Heart right ventricle (tissue), 16 donors: ENCODE measurements at regions of chr17 and their contacts with region 1.

Region 1: DNA sequence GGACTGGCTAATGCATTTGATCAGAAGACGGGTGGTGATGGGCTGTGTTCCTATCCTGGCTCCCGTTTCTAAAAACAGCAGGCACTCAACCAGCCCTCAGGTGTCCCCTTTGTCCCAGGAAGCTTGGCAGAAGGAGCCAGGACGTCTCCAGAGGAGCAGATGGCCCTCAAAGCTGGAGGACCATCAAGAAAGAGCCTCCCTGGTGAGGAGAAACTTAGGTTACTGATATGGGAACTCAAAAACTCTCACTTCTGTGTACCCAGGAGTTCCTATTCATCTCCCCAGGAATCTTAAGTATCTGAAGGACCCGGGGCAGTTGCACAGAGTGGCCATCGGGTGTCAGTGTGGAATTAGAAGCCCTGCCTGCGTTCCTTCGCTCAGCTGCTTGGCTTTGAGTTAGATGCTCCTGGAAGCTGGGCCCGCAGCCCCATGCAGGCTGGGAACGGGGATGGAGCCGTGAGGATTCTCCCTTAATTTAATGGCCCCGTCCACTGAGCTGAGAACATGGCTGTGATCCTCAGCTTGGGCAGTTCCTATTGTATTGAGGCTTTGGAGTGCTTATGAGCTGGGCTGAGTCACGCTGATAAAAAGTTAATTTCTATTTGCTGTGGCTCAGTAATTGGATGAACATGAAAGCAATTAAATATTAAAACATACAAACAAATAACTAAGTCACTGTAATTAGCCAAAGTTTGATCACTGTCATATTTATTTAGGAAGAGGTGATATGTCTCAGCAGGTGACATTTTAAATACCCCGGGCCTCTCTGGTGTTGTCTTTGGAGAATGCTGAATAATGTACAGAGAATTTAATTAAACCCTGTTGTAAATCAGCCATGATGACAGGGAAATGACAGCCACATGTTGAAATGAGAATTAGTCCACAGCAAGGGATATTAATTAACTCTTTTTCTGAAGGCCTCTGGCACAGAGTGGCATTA is 402.1 kb downstream of the SEC14L1 start:
- DNase-seq: peak; percentile 66 to 85
- ATAC-seq: peak; percentile 82 to 96 (median 94)
- H3K4me3 ChIP-seq: no peak overlapping the region
- H3K27ac ChIP-seq: peak overlapping the region in 9 of 10 donors; percentile 29 to 88 (median 71)
- H3K4me1 ChIP-seq: peaks cover 0 to 28% (median 13%) of the 10 kb centered on the region in 9 donors
- H3K27me3 ChIP-seq: peaks cover 0 to 20% (median 4%) of the 10 kb centered on the region in 7 donors
- CTCF ChIP-seq: peak; percentile 77 to 97 (median 92)

Region 2: DNA sequence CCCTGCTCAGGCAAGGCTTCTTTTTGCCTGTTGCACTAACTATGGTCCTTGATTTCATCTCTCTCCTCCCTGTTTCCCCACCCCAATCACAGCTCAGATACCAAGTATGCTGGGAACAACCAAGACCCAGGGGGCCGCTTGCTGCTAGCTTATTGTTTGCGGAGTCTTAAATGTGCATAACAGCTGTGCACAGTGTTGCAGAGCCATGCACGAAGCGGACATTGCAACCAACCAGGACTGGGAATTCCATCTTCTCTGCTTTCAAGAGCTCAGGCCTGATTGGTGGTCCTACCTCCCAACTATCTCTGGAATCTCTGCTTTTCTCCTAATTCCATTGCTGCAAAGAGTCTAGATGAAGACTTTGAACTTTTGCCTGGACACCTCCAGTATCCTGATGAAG is 134.4 kb after region 1 on chr17:
- intact Hi-C with region 1: loop called in 1 of 10 experiments (anchors 10 kb)
- DNase-seq: peak; percentile 36 to 40
- ATAC-seq: peak in 5 of 8 donors; percentile 31 to 65 (median 62)
- H3K4me3 ChIP-seq: peak overlapping the region in 2 of 10 donors; percentile 14 to 23
- H3K27ac ChIP-seq: peak overlapping the region in 7 of 10 donors; percentile 20 to 75 (median 50)
- H3K4me1 ChIP-seq: peaks cover 11 to 47% (median 27%) of the 10 kb centered on the region in 9 donors
- H3K27me3 ChIP-seq: no peaks in the 10 kb centered on the region
- CTCF ChIP-seq: no peak

Region 3: GRCh38 chr17:77724876-77725615 is 182.2 kb after region 1 on chr17:
- intact Hi-C with region 1: loop called in 5 of 10 experiments (anchors 5 to 10 kb)
- DNase-seq: no peak
- ATAC-seq: no peak
- H3K4me3 ChIP-seq: no peak overlapping the region
- H3K27ac ChIP-seq: no peak overlapping the region
- H3K4me1 ChIP-seq: peaks cover 0 to 31% (median 11%) of the 10 kb centered on the region in 9 donors
- H3K27me3 ChIP-seq: no peaks in the 10 kb centered on the region
- CTCF ChIP-seq: no peak

Region 4: DNA sequence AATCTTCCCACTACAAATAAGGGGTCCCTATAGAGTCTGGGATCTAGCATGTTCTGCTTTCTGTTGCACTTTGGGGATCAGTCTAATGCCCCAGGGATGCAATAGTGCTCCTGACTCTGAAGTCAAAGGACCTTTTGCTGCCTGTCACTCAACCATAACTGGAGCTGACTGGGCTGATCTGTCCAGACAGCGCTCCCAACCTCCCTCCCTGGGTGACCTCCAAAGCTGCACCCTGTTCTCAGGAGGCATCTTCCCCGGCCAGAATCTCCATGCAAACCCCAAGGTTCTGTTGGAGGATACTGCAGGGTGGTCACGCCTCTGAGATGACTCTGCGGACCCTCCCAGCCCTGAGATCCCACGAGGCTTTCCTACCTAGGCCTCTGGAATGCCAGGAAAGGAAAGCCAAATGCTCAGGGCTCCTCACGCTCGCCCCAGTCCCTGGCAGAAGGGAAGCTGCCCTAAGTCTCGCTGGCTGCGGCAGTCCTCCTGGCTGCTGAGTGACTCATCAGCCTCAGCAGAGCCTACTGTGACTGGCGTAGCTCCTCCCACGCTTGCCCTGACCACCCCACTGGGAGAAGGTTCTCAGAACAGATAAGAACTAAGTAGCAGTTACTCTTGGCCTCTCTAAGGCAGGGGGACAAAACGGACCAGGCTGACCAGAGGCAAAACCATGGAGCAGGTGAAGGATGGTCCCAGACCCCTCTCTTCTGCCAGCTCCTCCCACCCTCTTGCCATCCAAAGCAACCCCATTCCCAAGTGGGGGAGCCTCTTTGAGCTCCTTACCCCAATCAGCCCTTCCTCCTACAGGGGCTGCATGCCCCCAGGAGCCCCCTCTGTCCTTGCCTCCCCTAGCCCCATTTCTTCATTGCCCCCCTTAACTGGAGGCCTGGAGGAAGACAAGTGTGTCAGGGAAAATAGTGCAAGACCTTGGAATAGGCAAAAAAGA is 291.6 kb after region 1 on chr17:
- intact Hi-C with region 1: loop called in 1 of 10 experiments (anchors 10 kb)
- DNase-seq: peak; percentile 67 to 68
- ATAC-seq: peak in 7 of 8 donors; percentile 15 to 70 (median 35)
- H3K4me3 ChIP-seq: peak overlapping the region in 1 of 10 donors; percentile 10
- H3K27ac ChIP-seq: peak overlapping the region in 7 of 10 donors; percentile 19 to 70 (median 56)
- H3K4me1 ChIP-seq: peaks cover 28 to 63% (median 48%) of the 10 kb centered on the region in 9 donors
- H3K27me3 ChIP-seq: peaks cover 0 to 3% (median 0%) of the 10 kb centered on the region in 7 donors
- CTCF ChIP-seq: no peak

Region 5: DNA sequence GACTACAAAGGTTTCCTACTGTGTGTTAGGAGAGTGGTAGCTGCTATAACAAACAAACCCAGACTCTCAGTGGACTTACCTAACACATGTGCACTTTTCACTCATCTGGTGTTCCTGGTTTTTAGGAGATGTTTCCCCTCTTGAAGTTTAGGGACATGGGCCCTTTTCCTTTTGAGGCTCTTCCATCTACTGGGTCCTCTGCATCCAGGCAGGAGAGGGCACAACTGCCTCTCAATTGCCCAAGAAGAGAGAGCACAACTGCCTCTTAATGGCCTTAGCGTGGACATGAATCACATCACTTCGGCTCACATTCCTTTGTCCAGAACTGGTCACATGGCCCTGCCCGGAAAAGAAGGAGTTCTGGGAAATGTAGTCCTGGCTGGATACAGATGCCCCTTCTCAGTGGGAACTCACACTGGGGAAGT is 405.9 kb after region 1 on chr17:
- intact Hi-C with region 1: no loop called
- DNase-seq: peak in 1 of 2 donors; percentile 19
- ATAC-seq: peak; percentile 17 to 82 (median 71)
- H3K4me3 ChIP-seq: no peak overlapping the region
- H3K27ac ChIP-seq: no peak overlapping the region
- H3K4me1 ChIP-seq: peaks cover 0 to 7% (median 0%) of the 10 kb centered on the region in 9 donors
- H3K27me3 ChIP-seq: peaks cover 0 to 44% (median 0%) of the 10 kb centered on the region in 7 donors
- CTCF ChIP-seq: no peak

Region 6: DNA sequence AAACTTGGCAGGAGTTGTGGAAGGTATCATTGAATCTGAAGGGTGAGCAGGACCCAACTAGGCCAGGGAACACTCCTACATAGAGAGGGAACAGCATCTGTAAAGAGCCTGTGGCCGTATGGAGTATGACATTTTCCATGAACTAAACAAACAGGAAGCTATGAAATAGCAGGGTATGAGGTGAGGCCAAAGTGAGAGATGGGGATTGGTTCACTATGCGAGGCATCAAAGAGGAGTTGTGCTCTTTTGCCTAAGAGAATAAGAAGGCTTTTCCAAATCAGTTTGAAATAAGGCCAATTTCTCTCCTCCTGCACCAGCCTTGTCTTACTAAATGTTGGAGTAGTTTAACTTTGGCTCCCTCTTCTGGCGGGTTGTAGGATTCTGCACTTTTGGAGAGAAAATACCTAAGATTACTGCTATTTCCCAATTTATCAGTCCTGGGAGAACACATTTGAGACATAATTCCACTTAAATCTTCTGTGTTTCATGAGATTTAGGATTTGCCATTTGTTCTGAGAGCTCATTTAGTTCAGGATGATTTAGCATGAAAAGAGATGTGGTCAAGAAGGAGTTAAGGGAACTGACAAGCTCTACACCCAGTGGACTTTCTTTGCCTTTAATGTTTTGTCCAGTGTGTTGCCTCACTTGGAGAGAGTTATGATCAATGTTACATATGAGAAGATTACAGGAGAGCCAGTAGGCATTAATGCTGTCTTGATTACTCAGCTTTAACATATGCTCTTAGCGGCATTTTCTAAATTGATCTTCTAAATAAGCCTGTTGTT is 471.1 kb after region 1 on chr17:
- intact Hi-C with region 1: loop called (anchors 1 to 10 kb)
- DNase-seq: peak in 1 of 2 donors; percentile 43
- ATAC-seq: peak; percentile 44 to 78 (median 70)
- H3K4me3 ChIP-seq: no peak overlapping the region
- H3K27ac ChIP-seq: no peak overlapping the region
- H3K4me1 ChIP-seq: peaks cover 0 to 18% (median 10%) of the 10 kb centered on the region in 9 donors
- H3K27me3 ChIP-seq: no peaks in the 10 kb centered on the region
- CTCF ChIP-seq: peak; percentile 45 to 89 (median 77)